ENCODE measurements at regions of chr14 and their contacts with region 1.

Region 1: DNA sequence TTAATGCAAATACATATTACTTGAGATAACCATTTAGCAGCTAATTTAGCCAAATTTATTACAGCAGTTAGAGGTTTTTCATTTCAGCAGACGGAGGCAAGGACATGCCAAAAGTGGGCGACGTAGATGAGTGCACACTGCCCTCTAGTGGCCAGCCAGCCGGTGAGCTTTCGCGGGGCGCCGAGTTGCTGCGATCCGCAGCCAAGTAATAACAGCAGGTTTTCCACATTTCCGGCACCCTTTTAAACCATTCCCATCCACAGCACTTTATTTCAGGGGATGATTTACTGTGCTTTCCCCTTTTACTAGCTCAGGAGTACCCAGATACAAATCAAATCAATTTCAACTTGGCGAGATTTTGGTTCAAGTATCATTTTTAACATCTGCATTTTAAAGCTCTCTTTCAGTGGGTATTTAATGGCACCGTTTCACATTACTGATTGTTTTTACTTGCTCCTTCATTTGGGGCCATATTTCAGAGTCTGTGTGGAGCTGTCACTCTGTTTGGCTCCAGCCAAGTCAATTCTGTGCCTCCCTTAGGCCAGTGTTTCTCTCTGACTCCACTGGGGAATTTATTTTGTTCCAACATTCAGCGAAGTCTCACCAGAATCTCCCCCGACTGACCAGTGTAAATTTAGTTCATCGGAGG is 158.0 kb downstream of the EGLN3 start:
- DNase-seq: peak; percentile 83
- H3K4me3 ChIP-seq: peak overlapping the region in 1 of 4 donors; percentile 33
- H3K27ac ChIP-seq: peak overlapping the region in 2 of 4 donors; percentile 5 to 32
- H3K4me1 ChIP-seq: peaks cover 0 to 13% (median 2%) of the 10 kb centered on the region in 4 donors
- H3K27me3 ChIP-seq: no peaks in the 10 kb centered on the region
- CTCF ChIP-seq: peak; percentile 89 to 94 (median 91)
- EP300 ChIP-seq: no peak
- POLR2A ChIP-seq: no peak

Region 2: GRCh38 chr14:32576088-32576795 is 1216.6 kb before region 1 on chr14:
- in situ Hi-C with region 1: loop called (anchors 5 to 25 kb)
- intact Hi-C with region 1: loop called (anchors 5 kb)
- DNase-seq: peak; percentile 41
- H3K4me3 ChIP-seq: peak overlapping the region in 1 of 4 donors; percentile 29
- H3K27ac ChIP-seq: no peak overlapping the region
- H3K4me1 ChIP-seq: peaks cover 8 to 29% (median 14%) of the 10 kb centered on the region in 4 donors
- H3K27me3 ChIP-seq: no peaks in the 10 kb centered on the region
- CTCF ChIP-seq: peak; percentile 88 to 97 (median 95)
- EP300 ChIP-seq: no peak
- POLR2A ChIP-seq: no peak

Region 3: GRCh38 chr14:32710731-32711680 is 1081.8 kb before region 1 on chr14:
- in situ Hi-C with region 1: loop called in 1 of 4 experiments (anchors 25 kb)
- intact Hi-C with region 1: no loop called
- DNase-seq: no peak
- H3K4me3 ChIP-seq: peak overlapping the region in 2 of 4 donors; percentile 2 to 20
- H3K27ac ChIP-seq: peak overlapping the region; percentile 52 to 76 (median 66)
- H3K4me1 ChIP-seq: peaks cover 0 to 19% (median 8%) of the 10 kb centered on the region in 4 donors
- H3K27me3 ChIP-seq: no peaks in the 10 kb centered on the region
- CTCF ChIP-seq: peak; percentile 43 to 50 (median 46)
- EP300 ChIP-seq: no peak
- POLR2A ChIP-seq: no peak

Region 4: DNA sequence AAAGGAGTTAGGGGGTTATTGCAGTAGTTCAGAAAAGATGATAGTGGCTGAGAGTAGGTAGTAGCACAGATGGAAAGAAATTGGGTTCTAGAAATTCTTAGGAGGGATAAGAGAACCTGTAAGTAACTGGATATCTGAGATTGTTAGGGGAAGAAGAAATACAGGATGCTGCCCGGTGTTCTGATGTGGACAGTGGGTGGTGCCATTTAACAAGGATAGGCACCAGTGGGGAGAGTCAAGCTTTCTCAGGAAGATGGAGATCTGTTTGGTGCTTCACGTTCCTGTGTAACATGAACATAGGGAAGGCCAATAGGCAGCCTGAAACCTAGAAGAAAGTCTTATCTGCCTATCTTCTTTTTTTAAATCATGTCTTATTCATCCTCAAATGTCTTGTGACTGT is 608.3 kb before region 1 on chr14:
- in situ Hi-C with region 1: loop called in 1 of 4 experiments (anchors 25 kb)
- intact Hi-C with region 1: no loop called
- DNase-seq: no peak
- H3K4me3 ChIP-seq: no peak overlapping the region
- H3K27ac ChIP-seq: no peak overlapping the region
- H3K4me1 ChIP-seq: no peaks in the 10 kb centered on the region
- H3K27me3 ChIP-seq: no peaks in the 10 kb centered on the region
- CTCF ChIP-seq: peak in 2 of 5 experiments; percentile 16 to 17
- EP300 ChIP-seq: no peak
- POLR2A ChIP-seq: no peak

Region 5: GRCh38 chr14:33457021-33457420 is 335.8 kb before region 1 on chr14:
- in situ Hi-C with region 1: loop called in 1 of 4 experiments (anchors 25 kb)
- intact Hi-C with region 1: no loop called
- DNase-seq: no peak
- H3K4me3 ChIP-seq: no peak overlapping the region
- H3K27ac ChIP-seq: no peak overlapping the region
- H3K4me1 ChIP-seq: peaks cover 5 to 58% (median 35%) of the 10 kb centered on the region in 4 donors
- H3K27me3 ChIP-seq: no peaks in the 10 kb centered on the region
- CTCF ChIP-seq: no peak
- EP300 ChIP-seq: no peak
- POLR2A ChIP-seq: no peak

Region 6: DNA sequence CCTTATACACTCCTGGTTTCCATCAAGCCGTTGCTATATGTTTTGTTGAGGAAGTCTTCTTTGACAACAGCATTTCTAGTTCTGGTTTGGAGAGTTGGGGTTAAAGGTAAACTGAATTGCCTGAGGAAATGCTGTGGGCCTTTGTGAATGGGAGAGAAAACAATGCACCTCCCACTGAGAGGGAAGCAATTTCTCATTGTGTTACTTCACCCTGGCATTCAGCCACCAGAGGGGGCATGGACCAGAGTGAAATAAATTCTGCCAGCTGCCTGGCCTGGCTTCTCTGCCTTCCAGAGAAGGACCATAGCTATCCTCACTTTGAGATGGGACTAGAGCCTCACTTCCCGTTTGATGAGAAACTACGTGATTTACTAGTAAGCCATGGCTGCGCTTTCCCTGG is 317.2 kb before region 1 on chr14:
- in situ Hi-C with region 1: loop called in 2 of 4 experiments (anchors 25 kb)
- intact Hi-C with region 1: no loop called
- DNase-seq: peak; percentile 73
- H3K4me3 ChIP-seq: no peak overlapping the region
- H3K27ac ChIP-seq: no peak overlapping the region
- H3K4me1 ChIP-seq: peaks cover 0 to 6% (median 0%) of the 10 kb centered on the region in 4 donors
- H3K27me3 ChIP-seq: no peaks in the 10 kb centered on the region
- CTCF ChIP-seq: peak in 4 of 5 experiments; percentile 38 to 61 (median 48)
- EP300 ChIP-seq: no peak
- POLR2A ChIP-seq: no peak